ENCODE measurements at regions of chr19 and their contacts with region 1.

Region 1: GRCh38 chr19:38374429-38375176 is at the start of gene PSMD8:
- DNase-seq: peak; percentile 99
- H3K4me3 ChIP-seq: peak within 1 kb of the TSS; percentile 95
- H3K4me3 Mint-ChIP-seq: peak within 1 kb of the TSS; percentile 90
- H3K27ac Mint-ChIP-seq: peak within 1 kb of the TSS; percentile 92
- H3K4me1 ChIP-seq: 0 out of 2 replicates have a peak, but pooled peaks cover 4% of the 10 kb centered on the region
- H3K4me1 Mint-ChIP-seq: peaks cover 12% of the 10 kb centered on the region
- H3K27me3 ChIP-seq: no peaks in the 10 kb centered on the region
- H3K27me3 Mint-ChIP-seq: no peaks in the 10 kb centered on the region
- CTCF ChIP-seq: peak in 1 of 2 experiments; percentile 48
- total RNA-seq, gene PSMD8: 264 and 274 TPM in 2 replicates

Region 2: GRCh38 chr19:38229585-38230073 is 145.0 kb before region 1 on chr19:
- CTCF ChIA-PET with region 1: interaction called, 12 read pairs
- POLR2A ChIA-PET with region 1: no interaction called
- intact Hi-C with region 1: no loop called
- DNase-seq: peak; percentile 91 to 92
- H3K4me3 ChIP-seq: peak overlapping the region; percentile 37
- H3K4me3 Mint-ChIP-seq: peak overlapping the region; percentile 44
- H3K27ac Mint-ChIP-seq: no peak overlapping the region
- H3K4me1 ChIP-seq: peaks cover 12% of the 10 kb centered on the region; the same call in 1 of the 2 replicates
- H3K4me1 Mint-ChIP-seq: peaks cover 5% of the 10 kb centered on the region
- H3K27me3 ChIP-seq: no peaks in the 10 kb centered on the region
- H3K27me3 Mint-ChIP-seq: peaks cover 12% of the 10 kb centered on the region
- CTCF ChIP-seq: peak in 1 of 2 experiments; percentile 8

Region 3: GRCh38 chr19:38361633-38362075 is 12.9 kb before region 1 on chr19:
- CTCF ChIA-PET with region 1: interaction called, 21 read pairs
- POLR2A ChIA-PET with region 1: interaction called, 15 read pairs
- intact Hi-C with region 1: loop called (anchors 1 kb)
- DNase-seq: peak; percentile 92 to 94
- H3K4me3 ChIP-seq: peak overlapping the region; percentile 96
- H3K4me3 Mint-ChIP-seq: peak overlapping the region; percentile 79
- H3K27ac Mint-ChIP-seq: peak overlapping the region; percentile 20
- H3K4me1 ChIP-seq: peaks cover 10% of the 10 kb centered on the region
- H3K4me1 Mint-ChIP-seq: peaks cover 19% of the 10 kb centered on the region
- H3K27me3 ChIP-seq: peaks cover 7% of the 10 kb centered on the region
- H3K27me3 Mint-ChIP-seq: peaks cover 14% of the 10 kb centered on the region
- CTCF ChIP-seq: peak; percentile 22 to 34

Region 4: DNA sequence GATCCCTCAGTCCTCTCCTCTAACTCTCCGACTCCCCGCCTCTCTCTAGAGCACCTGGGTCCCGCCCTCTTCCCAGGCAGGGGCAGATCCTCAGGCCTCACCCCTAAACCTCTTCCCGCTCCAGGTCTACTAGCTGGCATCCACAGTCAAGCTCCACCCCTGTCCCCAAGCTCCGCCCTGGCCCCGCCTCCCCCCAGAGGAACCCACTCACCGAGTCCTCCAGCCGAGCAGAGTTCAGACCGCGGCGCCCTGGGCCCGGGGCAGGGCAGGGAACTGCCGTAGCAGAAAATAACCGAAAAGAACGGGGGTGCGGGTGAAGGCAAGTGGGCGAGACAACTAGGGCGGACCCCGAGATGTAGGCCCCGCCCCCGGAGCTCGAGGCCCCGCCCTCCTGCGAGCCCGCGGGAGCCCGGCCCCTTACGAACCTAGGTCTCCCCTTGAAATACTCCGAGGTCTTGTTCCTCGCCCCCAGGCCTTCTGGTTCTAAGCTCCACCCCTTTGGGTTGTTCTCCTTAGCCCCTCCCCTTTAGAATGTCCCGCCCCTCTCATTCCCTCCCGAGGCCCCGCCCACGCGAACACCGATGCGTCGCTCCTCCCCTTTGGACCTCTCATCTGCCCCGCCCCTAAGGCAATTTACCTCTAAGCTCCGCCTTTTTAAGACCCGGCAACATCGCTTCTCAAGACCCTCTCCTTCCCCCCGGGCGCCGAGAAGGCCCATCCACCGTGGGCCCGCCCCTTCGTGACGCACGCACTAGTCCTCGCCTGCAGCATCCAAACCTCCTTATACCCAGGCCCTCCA is 13.1 kb after region 1 on chr19 and contains the start of gene GGN:
- CTCF ChIA-PET with region 1: interaction called, 19 read pairs
- POLR2A ChIA-PET with region 1: interaction called, 26 read pairs
- intact Hi-C with region 1: loop called (anchors 1 kb)
- DNase-seq: peak; percentile 91 to 94
- H3K4me3 ChIP-seq: peak within 1 kb of the TSS; percentile 60
- H3K4me3 Mint-ChIP-seq: peak within 1 kb of the TSS; percentile 83
- H3K27ac Mint-ChIP-seq: peak within 1 kb of the TSS; percentile 43
- H3K4me1 ChIP-seq: peaks cover 25% of the 10 kb centered on the region
- H3K4me1 Mint-ChIP-seq: peaks cover 18% of the 10 kb centered on the region
- H3K27me3 ChIP-seq: no peaks in the 10 kb centered on the region
- H3K27me3 Mint-ChIP-seq: no peaks in the 10 kb centered on the region
- CTCF ChIP-seq: no peak
- total RNA-seq, gene GGN: 0.79 TPM in 1 of 2 replicates, not detected in the other